OCI-LY7 (cell line): ENCODE measurements at regions of chr11 and their contacts with region 1.

Region 1: DNA sequence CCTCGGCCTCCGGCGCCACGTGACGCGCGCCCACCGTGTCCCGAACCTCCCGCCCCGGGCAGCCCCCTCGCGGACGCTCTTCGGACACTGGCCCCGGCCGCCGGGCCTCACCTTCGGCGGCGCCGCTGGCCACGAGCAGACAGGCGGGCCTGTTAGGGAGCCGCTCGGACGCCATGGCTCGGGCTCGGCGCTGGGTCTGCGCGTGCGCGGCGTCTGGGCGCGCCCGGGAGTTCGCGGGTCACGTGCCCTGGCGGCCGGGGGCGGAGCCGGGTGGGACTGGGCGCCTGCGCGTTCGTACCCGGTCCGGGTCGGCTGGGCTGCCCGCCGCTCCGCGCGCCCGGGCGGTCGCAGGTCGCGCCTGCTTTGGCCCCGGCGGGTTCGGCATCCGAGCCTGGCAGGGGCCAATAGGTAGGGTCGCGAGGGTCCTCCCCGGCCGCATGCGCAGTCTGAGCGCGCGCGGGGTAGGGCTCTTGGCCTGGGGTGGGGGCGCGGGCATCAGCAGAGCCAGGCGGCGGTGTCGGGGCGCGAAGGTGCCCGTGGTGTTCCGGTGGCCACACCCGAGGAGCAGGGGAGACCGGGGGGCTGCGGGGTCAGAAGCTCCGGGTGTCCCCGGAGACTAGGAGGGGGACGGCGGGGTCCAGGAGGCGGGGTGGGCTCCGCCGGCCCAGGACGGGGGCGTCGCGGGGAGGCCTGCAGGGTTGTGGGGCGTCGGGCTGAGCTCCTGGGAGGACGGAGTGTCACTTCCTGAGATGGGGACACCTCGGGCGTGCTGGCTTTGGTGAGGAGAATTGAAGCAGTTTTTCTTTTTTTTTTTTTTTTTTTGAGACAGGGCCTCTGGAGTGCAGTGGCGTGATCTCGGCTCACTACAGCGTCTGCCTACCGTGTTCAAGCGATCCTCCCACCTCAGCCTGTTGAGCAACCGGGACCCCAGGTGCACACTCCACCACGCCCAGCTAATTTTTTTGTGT is at the start of gene GATD1:
- DNase-seq: peak; percentile 93
- H3K4me3 ChIP-seq: peak within 1 kb of the TSS; percentile 95
- H3K27ac ChIP-seq: peak within 1 kb of the TSS; percentile 57
- H3K4me1 ChIP-seq: peaks cover 22% of the 10 kb centered on the region
- CTCF ChIP-seq: no peak
- total RNA-seq, gene GATD1: 73.3 and 109 TPM in 2 replicates

Region 2: DNA sequence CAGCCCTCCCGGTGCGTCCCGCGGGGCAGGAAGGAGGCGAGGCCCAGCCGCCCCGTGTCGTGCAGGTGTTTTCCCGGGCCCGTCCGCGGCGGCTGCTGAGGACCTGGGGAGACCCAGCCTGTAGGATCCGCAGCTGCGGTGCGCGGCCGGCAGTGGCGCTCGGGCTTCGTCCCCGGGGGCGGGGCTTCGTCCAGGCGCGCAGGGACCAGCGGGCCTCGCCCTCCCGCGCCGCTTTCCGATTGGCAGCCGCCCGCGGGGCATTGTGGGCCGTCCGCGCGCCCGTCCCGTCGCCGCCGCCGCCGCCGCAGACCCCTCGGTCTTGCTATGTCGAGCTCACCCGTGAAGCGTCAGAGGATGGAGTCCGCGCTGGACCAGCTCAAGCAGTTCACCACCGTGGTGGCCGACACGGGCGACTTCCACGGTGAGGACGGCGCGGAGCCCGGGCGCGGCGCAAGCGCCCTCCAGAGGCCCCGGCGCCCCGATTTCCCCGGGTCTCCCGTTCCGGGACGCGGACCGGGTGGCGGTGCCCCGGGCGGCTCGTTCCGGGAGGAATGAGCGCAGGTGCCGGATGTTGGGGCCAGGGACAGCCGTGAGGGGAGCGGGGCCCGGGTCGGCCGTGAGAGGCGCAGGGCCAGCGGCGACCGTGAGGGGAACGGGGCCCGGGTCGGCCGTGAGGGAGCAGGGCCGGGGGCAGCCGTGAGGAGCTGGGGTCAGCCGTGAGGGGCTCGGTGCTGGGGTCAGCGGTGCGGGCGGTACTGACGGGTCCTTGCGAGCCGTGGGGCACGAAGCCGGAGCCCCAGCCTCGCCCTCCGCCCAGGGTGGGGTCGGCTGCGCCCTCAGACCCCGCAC is 30.2 kb before region 1 on chr11 and contains the start of gene TALDO1:
- CTCF ChIA-PET with region 1: no interaction called
- POLR2A ChIA-PET with region 1: interaction called, 5 read pairs
- intact Hi-C with region 1: loop called (anchors 1 kb)
- DNase-seq: peak; percentile 94
- H3K4me3 ChIP-seq: peak within 1 kb of the TSS; percentile 93
- H3K27ac ChIP-seq: peak within 1 kb of the TSS; percentile 68
- H3K4me1 ChIP-seq: peaks cover 22% of the 10 kb centered on the region
- CTCF ChIP-seq: peak; percentile 49; the same call in 1 of the 2 replicates
- total RNA-seq, gene TALDO1: 209 and 226 TPM in 2 replicates

Region 3: GRCh38 chr11:1207401-1208143 is 430.0 kb after region 1 on chr11:
- CTCF ChIA-PET with region 1: no interaction called
- POLR2A ChIA-PET with region 1: no interaction called
- intact Hi-C with region 1: no loop called
- DNase-seq: no peak
- H3K4me3 ChIP-seq: no peak overlapping the region
- H3K27ac ChIP-seq: no peak overlapping the region
- H3K4me1 ChIP-seq: no peaks in the 10 kb centered on the region
- CTCF ChIP-seq: no peak